ENCODE measurements at regions of chr22 and their contacts with region 1.

Region 1: GRCh38 chr22:32796865-32797573 is 4.5 kb upstream of the TIMP3 start:
- DNase-seq: peak; percentile 90
- ATAC-seq: peak; percentile 75

Region 2: DNA sequence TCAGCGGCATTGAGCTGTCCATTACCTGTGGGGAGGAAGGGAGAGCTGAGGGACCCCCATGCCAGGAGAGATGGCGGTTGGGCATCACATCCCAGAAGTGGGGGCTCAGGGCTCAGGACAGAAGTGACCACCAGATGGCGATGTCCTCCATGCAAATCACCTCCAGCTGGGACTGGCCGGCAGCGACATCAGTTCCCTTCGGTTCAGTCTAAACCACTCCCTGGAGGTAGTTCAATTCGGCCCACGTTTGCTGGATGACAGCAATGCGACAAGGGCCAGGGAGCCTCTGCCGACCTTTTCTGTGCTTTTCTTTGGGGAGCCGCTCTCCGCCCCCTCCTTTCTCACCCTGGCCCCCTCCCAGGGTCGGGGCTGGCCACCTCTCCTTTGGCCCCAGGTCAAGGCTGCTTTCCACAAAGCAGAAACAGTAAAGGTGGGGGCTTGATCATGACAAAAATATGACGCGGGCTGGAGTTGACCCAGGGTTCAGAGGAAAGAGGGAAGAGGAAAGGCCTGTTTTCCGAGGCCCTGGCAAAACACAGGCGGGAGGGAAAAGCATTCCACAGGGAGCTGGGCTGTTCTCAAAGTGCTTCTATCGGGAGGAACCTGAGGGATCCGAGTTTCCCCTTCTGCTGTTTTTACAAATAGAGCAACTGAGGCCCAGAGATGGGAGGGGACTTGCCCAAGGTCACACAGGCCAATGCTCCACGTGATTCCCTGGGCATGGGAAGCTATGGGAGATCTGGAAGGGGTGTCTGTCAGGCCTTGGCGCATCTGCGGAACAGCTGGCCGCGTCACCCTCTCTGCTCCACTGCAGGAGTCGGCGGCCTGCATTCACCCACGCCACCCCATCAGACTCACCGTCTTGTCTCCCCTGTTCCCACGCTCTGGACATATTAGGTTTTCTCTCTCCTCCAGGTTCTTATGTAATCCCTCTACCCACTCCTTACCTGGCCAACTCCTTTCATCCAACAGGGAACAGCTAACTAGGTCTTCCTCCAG is 267.7 kb before region 1 on chr22:
- intact Hi-C with region 1: loop called (anchors 10 kb)
- DNase-seq: peak; percentile 94
- ATAC-seq: peak; percentile 76

Region 3: GRCh38 chr22:32649515-32650200 is 147.4 kb before region 1 on chr22:
- intact Hi-C with region 1: loop called (anchors 10 kb)
- DNase-seq: no peak
- ATAC-seq: no peak

Region 4: DNA sequence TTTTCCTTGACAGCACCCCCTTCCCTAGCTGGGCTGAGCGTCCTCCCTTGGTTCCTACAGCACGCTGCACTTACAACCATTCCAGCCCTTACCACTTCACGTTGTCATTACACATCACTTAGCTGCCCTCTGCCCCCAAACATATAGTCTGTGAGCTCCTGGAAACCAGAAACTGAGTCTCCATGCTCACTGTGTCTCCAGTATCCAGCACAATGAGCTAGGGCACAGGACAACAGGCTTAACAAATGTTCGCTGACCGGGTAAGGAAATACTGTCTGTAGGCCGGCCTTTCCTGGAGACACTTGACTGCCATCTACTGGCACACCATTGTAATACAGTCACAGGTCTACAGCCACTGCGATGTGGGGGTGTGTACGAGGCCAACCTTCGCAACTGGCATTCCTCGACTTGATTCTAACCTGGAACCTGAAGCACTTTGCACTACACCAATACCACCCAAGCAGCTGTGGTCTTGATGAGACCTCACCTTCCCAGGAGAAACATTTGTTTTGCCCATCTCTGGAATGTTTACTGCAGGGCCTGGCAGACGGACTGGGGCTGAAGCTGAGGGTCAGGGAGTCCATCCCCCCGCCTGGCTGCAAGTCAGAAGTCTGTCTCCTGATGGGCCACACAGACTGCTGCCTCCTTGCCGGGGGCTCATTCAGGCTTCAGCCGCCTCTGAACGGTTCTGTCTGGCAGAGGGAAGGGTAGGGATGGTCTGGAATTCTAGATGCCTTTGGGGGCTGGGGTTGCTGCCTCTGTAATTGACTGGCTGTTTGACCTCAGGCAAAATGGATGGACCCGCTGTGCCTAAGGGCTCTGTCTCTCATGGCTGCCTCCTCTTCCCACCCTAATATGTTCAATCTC is 189.1 kb after region 1 on chr22:
- intact Hi-C with region 1: loop called (anchors 5 kb)
- DNase-seq: peak; percentile 76
- ATAC-seq: peak; percentile 98

Region 5: GRCh38 chr22:33180356-33180755 is 383.3 kb after region 1 on chr22:
- intact Hi-C with region 1: no loop called
- DNase-seq: no peak
- ATAC-seq: no peak

Measured in sciatic nerve (tissue), 2 donors.